ENCODE measurements at regions of chr3 and their contacts with region 1.

Region 1: DNA sequence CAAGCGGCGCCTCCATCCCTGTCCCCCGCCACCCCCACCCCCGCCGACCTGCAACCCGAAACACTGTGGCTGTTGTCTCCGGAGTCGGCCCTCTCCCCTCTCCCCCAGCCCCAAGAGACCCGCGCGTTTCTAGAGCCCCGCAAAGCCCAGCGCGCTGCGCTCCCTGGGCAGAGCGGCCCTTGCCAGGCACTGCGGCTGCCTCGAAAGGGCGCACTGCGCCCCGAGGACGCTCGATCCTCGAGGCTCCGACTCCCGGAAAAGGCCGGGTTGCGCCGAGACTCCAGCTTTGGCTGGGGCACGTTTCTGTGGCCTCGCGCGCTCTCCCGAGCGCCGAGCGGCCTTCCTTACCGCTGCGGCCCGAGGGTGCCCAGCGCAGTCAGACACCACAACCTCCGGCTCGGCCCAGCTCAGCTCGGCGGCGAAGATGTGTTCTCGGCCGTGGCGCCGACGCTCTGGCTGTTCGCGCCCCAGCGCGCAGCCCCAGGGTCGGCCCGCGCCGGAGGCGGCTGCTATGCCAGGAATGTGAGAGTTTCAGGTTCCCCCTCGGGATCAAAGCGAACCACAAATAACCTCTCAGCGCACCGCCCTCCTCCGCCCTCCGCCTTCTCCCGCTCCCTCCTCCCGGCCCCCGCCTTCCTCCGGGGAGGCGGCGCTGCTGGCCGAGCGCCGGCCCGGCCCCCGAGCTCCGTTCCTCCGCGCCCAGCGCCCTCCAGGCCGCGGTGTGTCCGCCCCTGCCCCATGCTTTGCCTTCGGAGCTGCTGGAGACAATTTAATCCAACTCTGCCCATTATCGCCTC is at the start of gene AMOTL2:
- DNase-seq: no peak
- H3K4me3 ChIP-seq: peak within 1 kb of the TSS; percentile 64 to 73
- H3K27ac ChIP-seq: peak within 1 kb of the TSS; percentile 97
- H3K4me1 ChIP-seq: peaks cover 52% of the 10 kb centered on the region
- H3K27me3 ChIP-seq: no peaks in the 10 kb centered on the region
- CTCF ChIP-seq: no peak
- POLR2A ChIP-seq: peak in 1 of 2 donors; percentile 80
- total RNA-seq, gene AMOTL2: 60.6 TPM

Region 2: DNA sequence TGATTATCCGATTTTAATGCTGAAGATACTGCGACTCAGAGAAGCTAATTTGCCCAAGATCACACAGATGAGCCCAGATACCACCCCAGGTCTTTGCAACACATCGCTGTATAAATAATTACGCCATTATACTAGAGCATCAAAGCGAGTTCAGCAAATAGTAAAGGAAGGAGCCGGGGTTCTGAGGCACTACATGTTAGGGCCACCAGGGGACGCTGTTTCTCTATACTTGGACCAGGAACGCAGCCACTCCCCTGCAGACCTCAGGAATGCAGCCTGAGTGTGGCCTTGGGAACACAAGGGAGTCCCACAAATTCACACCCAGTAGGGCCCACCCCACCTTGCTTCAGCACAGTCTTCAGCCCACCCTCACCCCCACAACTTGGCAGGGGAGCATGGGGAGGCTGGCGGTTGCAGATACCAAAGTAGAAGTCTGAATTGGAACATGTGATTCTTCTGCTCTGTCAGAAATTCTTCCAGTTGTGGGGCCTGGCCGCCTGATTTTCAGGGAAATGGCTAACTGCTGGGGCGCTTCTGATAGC is 65.8 kb before region 1 on chr3:
- intact Hi-C with region 1: loop called (anchors 5 kb)
- DNase-seq: no peak
- H3K4me3 ChIP-seq: peak overlapping the region in 1 of 2 donors; percentile 8
- H3K27ac ChIP-seq: peak overlapping the region; percentile 80
- H3K4me1 ChIP-seq: peaks cover 40% of the 10 kb centered on the region
- H3K27me3 ChIP-seq: no peaks in the 10 kb centered on the region
- CTCF ChIP-seq: peak; percentile 98 to 100 (median 99)
- POLR2A ChIP-seq: no peak

Region 3: GRCh38 chr3:134464064-134464697 is 90.0 kb after region 1 on chr3:
- intact Hi-C with region 1: loop called (anchors 2 kb)
- DNase-seq: peak in 1 of 2 donors; percentile 95
- H3K4me3 ChIP-seq: no peak overlapping the region
- H3K27ac ChIP-seq: peak overlapping the region; percentile 71
- H3K4me1 ChIP-seq: peaks cover 46% of the 10 kb centered on the region
- H3K27me3 ChIP-seq: no peaks in the 10 kb centered on the region
- CTCF ChIP-seq: no peak
- POLR2A ChIP-seq: no peak

Measured in vagina (tissue), 2 donors.